ENCODE measurements at regions of chr17 and their contacts with region 1.

Region 1: DNA sequence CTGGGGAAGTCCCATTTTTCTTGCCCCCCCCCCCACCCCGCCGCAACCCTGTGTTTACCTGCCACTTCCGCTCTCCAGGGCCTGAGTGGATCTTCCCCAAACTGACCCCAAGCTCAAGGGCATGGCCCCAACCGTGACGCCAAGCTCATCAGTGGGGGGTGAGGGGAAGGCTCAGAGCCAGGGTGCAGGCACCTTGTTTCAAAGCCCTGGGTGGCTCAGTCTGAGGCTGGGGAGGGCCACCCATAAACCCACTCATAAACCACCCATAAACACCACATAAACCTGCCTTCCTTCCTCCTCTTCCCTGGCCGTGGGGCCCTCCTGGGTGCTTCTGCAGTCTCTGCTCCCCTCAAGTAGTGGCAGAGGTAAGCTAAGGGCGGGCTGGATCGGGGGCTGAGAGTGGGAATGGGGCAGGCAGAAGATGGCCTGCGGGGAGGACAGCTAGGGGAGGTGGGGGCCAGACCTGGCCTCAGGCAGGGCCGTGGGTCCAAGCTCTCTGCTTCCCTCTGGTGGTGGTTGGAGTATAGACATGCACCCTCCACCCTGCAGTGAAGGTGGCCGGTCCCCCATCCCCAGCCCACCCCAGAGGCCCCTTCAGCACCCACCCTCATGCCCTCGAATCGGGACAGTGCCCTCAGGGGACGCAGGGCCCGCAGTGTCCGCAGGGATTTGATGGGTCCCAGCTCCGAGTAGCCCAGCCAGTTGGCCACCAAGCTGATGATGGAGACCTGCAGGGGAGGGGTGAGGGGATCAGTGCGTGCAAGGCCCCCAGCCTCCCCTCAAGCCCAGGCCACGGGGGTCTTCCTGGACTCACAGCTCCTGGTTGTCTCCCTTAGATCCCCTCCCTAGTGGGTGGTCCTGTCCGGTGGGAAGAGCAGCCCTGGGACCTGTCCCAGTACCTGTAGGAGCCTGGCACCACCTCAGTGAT is 14.6 kb upstream of the CD79B start:
- DNase-seq: peak; percentile 79
- ATAC-seq: peak; percentile 95
- H3K4me3 Mint-ChIP-seq: peak overlapping the region; percentile 21
- H3K27ac Mint-ChIP-seq: peak overlapping the region; percentile 65
- H3K4me1 Mint-ChIP-seq: peaks cover 13% of the 10 kb centered on the region
- H3K27me3 Mint-ChIP-seq: no peaks in the 10 kb centered on the region

Region 2: DNA sequence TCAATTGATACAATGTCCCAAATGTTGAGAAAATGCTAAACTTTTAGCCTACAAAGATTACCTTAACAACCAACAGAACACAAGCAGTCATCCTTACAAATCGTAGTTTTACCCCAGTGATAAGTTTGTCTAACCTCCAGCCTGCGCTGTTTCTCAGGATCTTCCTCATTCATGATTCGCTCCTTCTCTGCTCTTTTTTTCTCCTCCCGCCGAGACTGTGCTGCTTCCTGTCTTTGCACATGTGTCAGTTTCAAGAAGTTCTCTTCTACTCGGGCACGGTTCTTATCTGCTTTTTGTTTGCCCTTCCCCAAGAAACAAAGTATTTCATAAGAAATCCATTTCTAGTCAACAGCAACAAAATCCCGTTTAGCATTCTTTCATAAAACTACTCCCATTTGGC is 194.9 kb before region 1 on chr17:
- CTCF ChIA-PET with region 1: no interaction called
- POLR2A ChIA-PET with region 1: no interaction called
- intact Hi-C with region 1: no loop called
- DNase-seq: peak; percentile 48
- ATAC-seq: peak; percentile 76
- H3K4me3 Mint-ChIP-seq: peak overlapping the region; percentile 50
- H3K27ac Mint-ChIP-seq: peak overlapping the region; percentile 81
- H3K4me1 Mint-ChIP-seq: peaks cover 21% of the 10 kb centered on the region
- H3K27me3 Mint-ChIP-seq: no peaks in the 10 kb centered on the region

Region 3: GRCh38 chr17:63834431-63835166 is 112.1 kb before region 1 on chr17:
- CTCF ChIA-PET with region 1: no interaction called
- POLR2A ChIA-PET with region 1: no interaction called
- intact Hi-C with region 1: no loop called
- DNase-seq: peak; percentile 77
- ATAC-seq: peak; percentile 89
- H3K4me3 Mint-ChIP-seq: no peak overlapping the region
- H3K27ac Mint-ChIP-seq: peak overlapping the region; percentile 75
- H3K4me1 Mint-ChIP-seq: peaks cover 42% of the 10 kb centered on the region
- H3K27me3 Mint-ChIP-seq: no peaks in the 10 kb centered on the region

Region 4: DNA sequence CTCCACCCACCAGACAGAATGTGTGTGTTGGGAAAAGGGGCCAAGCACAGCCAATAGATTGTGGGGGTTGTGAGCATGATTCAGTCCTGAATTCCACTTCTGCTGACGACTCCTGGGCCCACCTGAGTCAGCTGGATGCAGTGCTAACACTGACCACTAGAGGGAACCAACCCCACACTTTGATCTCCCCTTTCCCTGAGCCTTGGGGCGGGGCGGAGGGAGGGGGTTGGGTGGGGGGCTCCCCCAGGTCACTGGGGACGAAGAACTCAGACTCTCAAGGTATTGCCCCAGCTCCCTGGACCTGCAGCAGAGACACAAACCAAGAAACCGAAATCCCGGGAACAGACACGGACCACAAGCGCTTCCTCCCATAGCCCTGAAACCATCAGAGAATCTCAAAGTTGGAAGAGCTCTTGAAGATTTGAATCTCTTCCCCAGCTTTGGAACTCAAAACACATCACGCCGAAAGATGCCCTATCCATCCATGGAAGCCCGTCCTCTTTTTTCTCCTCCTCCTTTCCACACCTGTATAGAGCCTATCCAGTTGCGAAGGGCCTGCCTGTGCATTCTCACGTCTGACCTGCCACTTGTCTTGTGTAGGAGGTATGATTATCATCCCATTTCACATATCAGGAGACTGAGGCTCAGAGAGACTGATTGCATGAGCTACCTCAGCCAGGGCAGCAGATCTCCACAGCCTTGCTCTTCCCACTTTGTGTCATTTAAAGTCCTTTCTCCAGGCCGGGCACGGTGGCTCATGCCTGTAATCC is 34.9 kb before region 1 on chr17:
- CTCF ChIA-PET with region 1: interaction called, 11 read pairs
- POLR2A ChIA-PET with region 1: no interaction called
- intact Hi-C with region 1: no loop called
- DNase-seq: peak; percentile 80
- ATAC-seq: peak; percentile 78
- H3K4me3 Mint-ChIP-seq: no peak overlapping the region
- H3K27ac Mint-ChIP-seq: no peak overlapping the region
- H3K4me1 Mint-ChIP-seq: no peaks in the 10 kb centered on the region
- H3K27me3 Mint-ChIP-seq: no peaks in the 10 kb centered on the region

Region 5: GRCh38 chr17:63931981-63932561 is 14.6 kb before region 1 on chr17 and contains the start of gene CD79B:
- CTCF ChIA-PET with region 1: interaction called, 16 read pairs
- POLR2A ChIA-PET with region 1: no interaction called
- intact Hi-C with region 1: no loop called
- DNase-seq: peak; percentile 73
- ATAC-seq: peak; percentile 85
- H3K4me3 Mint-ChIP-seq: peak within 1 kb of the TSS; percentile 88
- H3K27ac Mint-ChIP-seq: peak within 1 kb of the TSS; percentile 93
- H3K4me1 Mint-ChIP-seq: peaks cover 15% of the 10 kb centered on the region
- H3K27me3 Mint-ChIP-seq: no peaks in the 10 kb centered on the region
- total RNA-seq, gene CD79B: 19.8 to 28.0 TPM

Region 6: DNA sequence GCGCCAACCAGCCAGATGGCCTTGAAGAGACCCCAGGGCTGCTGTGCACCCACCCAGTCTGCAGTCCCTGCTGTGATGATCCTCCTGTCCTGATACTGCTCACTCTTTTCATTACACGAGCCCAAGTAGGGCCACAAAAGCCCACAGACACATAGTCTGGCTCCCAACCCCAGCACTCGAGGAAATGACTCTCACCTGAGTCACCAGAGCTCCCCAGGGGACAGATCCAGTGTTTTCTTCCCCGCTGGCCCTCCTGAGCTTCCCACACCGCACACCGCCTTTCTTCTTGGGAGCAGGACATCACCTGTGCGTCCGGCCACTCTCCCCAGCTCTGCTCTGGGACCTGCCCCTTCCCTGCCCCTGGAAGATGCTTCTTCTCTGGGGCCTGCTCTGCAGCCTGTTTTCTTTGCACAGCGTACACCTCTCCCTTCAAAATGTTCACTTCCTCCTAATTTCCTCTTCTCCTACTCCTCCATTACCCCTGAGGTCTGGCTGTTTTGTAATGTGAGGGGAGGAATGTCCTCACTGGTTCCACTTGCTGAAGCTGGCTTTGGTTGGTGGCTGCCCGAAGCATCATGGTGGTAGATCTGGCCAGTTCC is 28.0 kb after region 1 on chr17:
- CTCF ChIA-PET with region 1: interaction called, 10 read pairs
- POLR2A ChIA-PET with region 1: no interaction called
- intact Hi-C with region 1: no loop called
- DNase-seq: peak; percentile 33
- ATAC-seq: peak; percentile 72
- H3K4me3 Mint-ChIP-seq: no peak overlapping the region
- H3K27ac Mint-ChIP-seq: peak overlapping the region; percentile 18
- H3K4me1 Mint-ChIP-seq: peaks cover 20% of the 10 kb centered on the region
- H3K27me3 Mint-ChIP-seq: no peaks in the 10 kb centered on the region

Region 7: GRCh38 chr17:63998050-63998720 is 51.5 kb after region 1 on chr17 and contains the start of gene PRR29:
- CTCF ChIA-PET with region 1: interaction called, 3 read pairs
- POLR2A ChIA-PET with region 1: no interaction called
- intact Hi-C with region 1: loop called in 1 of 2 experiments (anchors 5 kb)
- DNase-seq: peak; percentile 84
- ATAC-seq: peak; percentile 76
- H3K4me3 Mint-ChIP-seq: peak within 1 kb of the TSS; percentile 80
- H3K27ac Mint-ChIP-seq: peak within 1 kb of the TSS; percentile 31
- H3K4me1 Mint-ChIP-seq: peaks cover 30% of the 10 kb centered on the region
- H3K27me3 Mint-ChIP-seq: no peaks in the 10 kb centered on the region
- total RNA-seq, gene PRR29: 1.0 to 1.5 TPM